HEK293 (cell line): ENCODE measurements at regions of chr17 and their contacts with region 1.

Region 1: DNA sequence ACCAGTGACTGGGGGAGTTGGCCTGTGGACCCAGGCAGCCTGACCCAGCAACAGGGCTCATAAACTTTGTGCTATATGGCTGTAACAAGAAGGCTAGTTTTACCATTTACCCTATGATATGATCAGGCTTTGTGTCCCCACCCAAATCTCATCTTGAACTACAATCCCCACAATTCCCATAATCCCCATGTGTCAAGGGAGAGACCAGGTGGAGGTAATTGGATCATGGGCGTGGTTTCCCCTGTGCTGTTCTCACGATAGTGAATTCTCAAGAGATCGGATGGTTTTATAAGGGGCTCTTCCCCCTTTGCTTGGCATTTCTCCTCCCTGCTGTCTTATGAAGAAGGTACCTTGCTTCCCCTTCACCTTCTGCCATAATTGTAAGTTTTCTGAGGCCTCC is 111.2 kb upstream of the NLRP1 start:
- H3K4me3 ChIP-seq: no peak overlapping the region
- H3K27ac ChIP-seq: no peak overlapping the region
- H3K4me1 ChIP-seq: no peaks in the 10 kb centered on the region; the same call in 1 of the 2 replicates
- CTCF ChIP-seq: no peak

Region 2: GRCh38 chr17:5640726-5641125 is 54.8 kb before region 1 on chr17:
- CTCF ChIA-PET with region 1: no interaction called
- POLR2A ChIA-PET with region 1: no interaction called
- H3K4me3 ChIP-seq: no peak overlapping the region
- H3K27ac ChIP-seq: no peak overlapping the region
- H3K4me1 ChIP-seq: no peaks in the 10 kb centered on the region
- CTCF ChIP-seq: no peak

Region 3: GRCh38 chr17:5706577-5707216 is 11.2 kb after region 1 on chr17:
- CTCF ChIA-PET with region 1: interaction called, 10 read pairs
- POLR2A ChIA-PET with region 1: no interaction called
- H3K4me3 ChIP-seq: no peak overlapping the region
- H3K27ac ChIP-seq: no peak overlapping the region
- H3K4me1 ChIP-seq: no peaks in the 10 kb centered on the region
- CTCF ChIP-seq: peak; percentile 54